Activated B cell treated with CpG ODN at 0.5 μM for 24 hours (primary cell): ENCODE measurements at regions of chr15 and their contacts with region 1.

Region 1: DNA sequence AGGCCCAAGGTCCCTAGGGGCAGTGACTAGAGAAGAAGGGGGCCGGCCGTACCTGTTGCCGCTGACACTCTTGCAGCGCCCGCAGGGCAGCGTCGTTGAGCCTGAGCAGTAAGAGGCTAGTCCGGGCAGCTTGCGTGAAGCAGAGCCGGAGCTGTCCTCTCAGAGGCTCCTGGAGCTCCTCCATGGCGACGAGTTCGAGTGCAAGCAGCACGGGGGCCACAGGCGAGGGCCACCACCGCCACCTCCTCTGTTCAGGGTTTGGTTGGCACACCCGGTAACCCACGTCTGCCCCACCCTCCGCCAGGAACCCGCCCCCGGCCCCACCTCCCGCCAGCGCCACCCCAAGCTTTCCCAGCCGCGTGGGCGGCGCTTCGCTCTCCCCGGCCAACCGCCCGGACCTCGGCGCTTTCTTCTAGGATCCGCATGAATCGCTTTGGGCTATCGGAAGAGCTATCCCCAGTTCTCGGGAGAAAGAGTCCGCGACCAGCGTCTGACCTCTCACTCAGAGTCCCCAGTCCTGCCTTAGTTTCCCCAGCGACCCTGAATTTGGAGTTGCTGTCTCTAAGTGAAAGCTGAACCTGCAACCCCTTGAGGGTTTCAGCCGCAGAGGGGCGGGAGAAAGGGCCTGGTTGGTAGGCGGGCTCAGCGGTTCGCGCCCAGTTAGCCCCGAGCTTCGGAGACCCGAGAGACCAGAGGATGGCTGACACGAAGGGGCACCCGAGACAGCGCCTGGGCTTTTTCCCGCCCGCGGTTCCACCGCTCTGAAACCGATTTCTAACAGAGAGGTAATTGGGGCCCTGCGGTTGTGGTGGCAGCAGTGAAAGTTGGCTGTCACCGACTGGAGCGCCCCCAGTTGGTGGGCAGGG is at the start of gene ELL3:
- DNase-seq: peak; percentile 82
- ATAC-seq: peak; percentile 69
- H3K4me3 Mint-ChIP-seq: peak within 1 kb of the TSS; percentile 96
- H3K27ac Mint-ChIP-seq: peak within 1 kb of the TSS; percentile 96
- H3K4me1 Mint-ChIP-seq: peaks cover 43% of the 10 kb centered on the region
- H3K27me3 Mint-ChIP-seq: no peaks in the 10 kb centered on the region
- CTCF ChIP-seq: no peak
- total RNA-seq, gene ELL3: 95.5 and 108 TPM in 2 replicates

Region 2: GRCh38 chr15:43791993-43792760 is 15.2 kb after region 1 on chr15 and contains the start of gene SERF2:
- CTCF ChIA-PET with region 1: interaction called, 49 read pairs
- POLR2A ChIA-PET with region 1: interaction called, 509 read pairs
- intact Hi-C with region 1: loop called (anchors 1 kb)
- DNase-seq: peak; percentile 96
- ATAC-seq: peak; percentile 88
- H3K4me3 Mint-ChIP-seq: peak within 1 kb of the TSS; percentile 98
- H3K27ac Mint-ChIP-seq: peak within 1 kb of the TSS; percentile 97
- H3K4me1 Mint-ChIP-seq: peaks cover 79% of the 10 kb centered on the region
- H3K27me3 Mint-ChIP-seq: no peaks in the 10 kb centered on the region
- CTCF ChIP-seq: no peak
- total RNA-seq, gene SERF2: 601 and 656 TPM in 2 replicates

Region 3: GRCh38 chr15:43808960-43809678 is 32.2 kb after region 1 on chr15:
- CTCF ChIA-PET with region 1: interaction called, 9 read pairs
- POLR2A ChIA-PET with region 1: interaction called, 80 read pairs
- intact Hi-C with region 1: loop called (anchors 1 kb)
- DNase-seq: no peak
- ATAC-seq: peak; percentile 90
- H3K4me3 Mint-ChIP-seq: peak overlapping the region; percentile 62
- H3K27ac Mint-ChIP-seq: peak overlapping the region; percentile 85
- H3K4me1 Mint-ChIP-seq: peaks cover 28% of the 10 kb centered on the region
- H3K27me3 Mint-ChIP-seq: no peaks in the 10 kb centered on the region
- CTCF ChIP-seq: no peak

Region 4: DNA sequence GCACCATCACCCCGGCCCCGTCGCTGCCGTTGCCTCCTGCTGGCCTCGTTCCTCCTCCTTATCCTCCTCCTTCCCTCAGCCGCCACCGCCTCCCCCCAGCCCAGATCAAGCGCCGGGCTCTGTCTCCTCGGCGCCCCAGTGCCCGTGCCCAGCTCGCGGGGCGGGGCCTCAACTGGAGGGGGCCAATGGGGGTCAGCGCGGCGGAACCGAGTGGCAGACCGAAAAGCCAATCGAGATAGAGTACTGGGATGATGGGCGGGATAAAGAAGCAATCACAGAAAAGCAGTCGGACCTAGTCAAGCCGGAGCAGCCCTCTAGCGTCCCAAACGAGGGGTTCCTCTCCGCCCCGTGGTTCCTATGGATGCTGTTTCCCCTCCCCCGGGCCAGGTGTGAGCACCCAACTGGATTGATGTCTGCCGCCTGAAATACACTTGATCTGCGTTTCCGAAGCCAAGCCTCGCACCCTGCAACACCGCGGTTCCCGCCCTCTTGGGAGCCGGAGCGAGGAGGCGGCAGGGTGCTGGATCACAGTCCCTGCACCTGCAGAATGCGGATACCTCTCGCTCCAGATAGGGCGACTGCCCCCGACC is 418.3 kb after region 1 on chr15 and contains the start of gene FRMD5:
- CTCF ChIA-PET with region 1: no interaction called
- POLR2A ChIA-PET with region 1: no interaction called
- intact Hi-C with region 1: loop called (anchors 1 kb)
- DNase-seq: peak; percentile 76
- ATAC-seq: peak; percentile 98
- H3K4me3 Mint-ChIP-seq: peak within 1 kb of the TSS; percentile 86
- H3K27ac Mint-ChIP-seq: no peak within 1 kb of the TSS
- H3K4me1 Mint-ChIP-seq: peaks cover 18% of the 10 kb centered on the region
- H3K27me3 Mint-ChIP-seq: peaks cover 51% of the 10 kb centered on the region
- CTCF ChIP-seq: no peak
- total RNA-seq, gene FRMD5: 0.53 TPM in 1 of 2 replicates, not detected in the other

Region 5: GRCh38 chr15:44296625-44297524 is 519.9 kb after region 1 on chr15:
- CTCF ChIA-PET with region 1: no interaction called
- POLR2A ChIA-PET with region 1: no interaction called
- intact Hi-C with region 1: no loop called
- DNase-seq: no peak
- ATAC-seq: peak; percentile 61
- H3K4me3 Mint-ChIP-seq: no peak overlapping the region
- H3K27ac Mint-ChIP-seq: peak overlapping the region; percentile 77
- H3K4me1 Mint-ChIP-seq: peaks cover 58% of the 10 kb centered on the region
- H3K27me3 Mint-ChIP-seq: no peaks in the 10 kb centered on the region
- CTCF ChIP-seq: no peak